ENCODE measurements at regions of chr17 and their contacts with region 1.

Region 1: DNA sequence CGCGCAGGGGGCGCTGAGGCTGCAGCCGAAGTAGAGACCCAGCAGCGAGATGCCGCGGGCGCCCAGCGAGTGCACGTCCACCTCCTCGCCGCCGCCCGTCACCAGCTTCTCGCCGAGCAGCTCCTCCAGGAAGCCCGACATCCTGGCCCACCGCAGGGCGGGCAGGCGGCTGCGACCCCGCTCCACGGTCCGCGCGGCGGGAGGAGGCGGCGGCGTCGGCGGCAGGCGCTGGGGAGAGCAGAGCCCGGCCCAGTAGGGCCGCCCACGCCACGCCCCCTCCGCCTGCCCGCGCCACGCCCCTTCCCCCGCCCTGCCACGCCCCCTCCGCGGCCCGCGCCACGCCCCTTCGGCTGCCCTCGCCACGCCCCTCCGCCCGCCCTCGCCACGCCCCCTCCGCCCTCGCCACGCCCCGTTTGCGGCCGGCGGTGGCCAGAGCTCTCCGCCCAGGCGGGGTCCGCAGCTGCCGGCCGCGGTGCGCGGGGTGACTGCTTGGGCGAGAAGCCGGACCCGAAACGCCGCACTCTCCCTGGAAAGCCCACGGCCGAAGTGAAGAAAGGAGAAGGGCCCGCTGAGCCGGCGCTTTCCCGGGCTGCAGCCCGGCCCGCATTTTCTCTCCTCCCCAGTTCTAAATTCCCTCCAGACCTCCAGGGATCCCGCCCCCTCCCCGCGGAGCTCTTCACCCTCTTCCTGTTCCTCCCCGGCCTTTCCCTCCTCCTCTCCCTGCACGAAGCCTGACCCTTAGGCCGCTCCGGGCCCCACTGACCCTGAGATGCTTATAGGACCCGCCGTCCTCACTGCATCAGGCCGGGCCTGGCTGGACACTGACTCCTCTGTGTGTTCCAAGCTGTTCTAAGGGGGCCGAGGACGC is at the start of gene NXN:
- DNase-seq: peak; percentile 81 to 96 (median 90)
- ATAC-seq: peak; percentile 86
- H3K4me3 ChIP-seq: peak within 1 kb of the TSS; percentile 53 to 58
- H3K4me3 Mint-ChIP-seq: peak within 1 kb of the TSS; percentile 78
- H3K27ac ChIP-seq: no peak within 1 kb of the TSS
- H3K27ac Mint-ChIP-seq: peak within 1 kb of the TSS; percentile 15
- H3K4me1 ChIP-seq: peaks cover 18% of the 10 kb centered on the region
- H3K4me1 Mint-ChIP-seq: peaks cover 19% of the 10 kb centered on the region
- H3K27me3 ChIP-seq: peaks cover 16 to 17% of the 10 kb centered on the region in 2 experiments
- H3K27me3 Mint-ChIP-seq: peaks cover 32% of the 10 kb centered on the region
- CTCF ChIP-seq: no peak
- total RNA-seq, gene NXN: 0.17 to 0.95 TPM

Region 2: GRCh38 chr17:143782-144281 is 835.9 kb before region 1 on chr17:
- CTCF ChIA-PET with region 1: no interaction called
- POLR2A ChIA-PET with region 1: no interaction called
- intact Hi-C with region 1: loop called in 1 of 2 experiments (anchors 2 kb)
- DNase-seq: peak; percentile 69 to 92 (median 83)
- ATAC-seq: peak; percentile 99
- H3K4me3 ChIP-seq: no peak overlapping the region
- H3K4me3 Mint-ChIP-seq: no peak overlapping the region
- H3K27ac ChIP-seq: no peak overlapping the region
- H3K27ac Mint-ChIP-seq: no peak overlapping the region
- H3K4me1 ChIP-seq: peaks cover 3% of the 10 kb centered on the region
- H3K4me1 Mint-ChIP-seq: peaks cover 2% of the 10 kb centered on the region
- H3K27me3 ChIP-seq: no peaks in the 10 kb centered on the region
- H3K27me3 Mint-ChIP-seq: peaks cover 6% of the 10 kb centered on the region
- CTCF ChIP-seq: peak; percentile 94

Region 3: GRCh38 chr17:404703-405102 is 575.1 kb before region 1 on chr17:
- CTCF ChIA-PET with region 1: no interaction called
- POLR2A ChIA-PET with region 1: no interaction called
- intact Hi-C with region 1: no loop called
- DNase-seq: no peak
- ATAC-seq: no peak
- H3K4me3 ChIP-seq: no peak overlapping the region
- H3K4me3 Mint-ChIP-seq: no peak overlapping the region
- H3K27ac ChIP-seq: no peak overlapping the region
- H3K27ac Mint-ChIP-seq: no peak overlapping the region
- H3K4me1 ChIP-seq: peaks cover 8% of the 10 kb centered on the region
- H3K4me1 Mint-ChIP-seq: peaks cover 9% of the 10 kb centered on the region
- H3K27me3 ChIP-seq: no peaks in the 10 kb centered on the region
- H3K27me3 Mint-ChIP-seq: no peaks in the 10 kb centered on the region
- CTCF ChIP-seq: no peak

Region 4: GRCh38 chr17:716238-716637 is 263.5 kb before region 1 on chr17:
- CTCF ChIA-PET with region 1: interaction called, 4 read pairs
- POLR2A ChIA-PET with region 1: interaction called, 5 read pairs
- intact Hi-C with region 1: loop called (anchors 1 to 5 kb)
- DNase-seq: no peak
- ATAC-seq: no peak
- H3K4me3 ChIP-seq: no peak overlapping the region
- H3K4me3 Mint-ChIP-seq: no peak overlapping the region
- H3K27ac ChIP-seq: no peak overlapping the region
- H3K27ac Mint-ChIP-seq: no peak overlapping the region
- H3K4me1 ChIP-seq: peaks cover 18% of the 10 kb centered on the region
- H3K4me1 Mint-ChIP-seq: peaks cover 31% of the 10 kb centered on the region
- H3K27me3 ChIP-seq: no peaks in the 10 kb centered on the region
- H3K27me3 Mint-ChIP-seq: no peaks in the 10 kb centered on the region
- CTCF ChIP-seq: no peak

Region 5: DNA sequence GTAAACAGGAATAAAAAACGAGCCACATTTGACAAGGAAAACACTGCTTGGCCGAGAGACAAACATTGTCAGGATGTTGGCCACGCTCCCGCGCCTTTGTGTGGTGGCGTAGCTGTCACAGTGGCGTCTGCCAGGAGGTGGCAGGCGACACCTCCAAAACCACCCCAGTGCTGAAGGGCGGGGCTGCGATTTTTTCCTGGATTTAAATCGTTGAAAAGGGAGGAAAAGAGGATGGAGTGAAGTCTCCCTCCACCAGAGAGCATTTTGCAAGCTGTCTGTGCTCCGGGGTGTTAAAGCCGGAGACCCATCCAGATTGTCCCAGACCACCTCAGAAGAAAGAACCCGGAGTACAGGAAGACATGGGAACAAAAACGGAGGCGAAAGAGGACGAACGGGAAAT is 184.9 kb before region 1 on chr17:
- CTCF ChIA-PET with region 1: interaction called, 40 read pairs
- POLR2A ChIA-PET with region 1: interaction called, 3 read pairs
- intact Hi-C with region 1: loop called in 1 of 2 experiments (anchors 1 kb)
- DNase-seq: peak in 8 of 9 experiments; percentile 6 to 65 (median 42)
- ATAC-seq: peak; percentile 76
- H3K4me3 ChIP-seq: no peak overlapping the region
- H3K4me3 Mint-ChIP-seq: no peak overlapping the region
- H3K27ac ChIP-seq: no peak overlapping the region
- H3K27ac Mint-ChIP-seq: no peak overlapping the region
- H3K4me1 ChIP-seq: no peaks in the 10 kb centered on the region
- H3K4me1 Mint-ChIP-seq: peaks cover 5% of the 10 kb centered on the region
- H3K27me3 ChIP-seq: no peaks in the 10 kb centered on the region
- H3K27me3 Mint-ChIP-seq: no peaks in the 10 kb centered on the region
- CTCF ChIP-seq: peak; percentile 64

Region 6: GRCh38 chr17:1203111-1203966 is 223.6 kb after region 1 on chr17:
- CTCF ChIA-PET with region 1: no interaction called
- POLR2A ChIA-PET with region 1: no interaction called
- intact Hi-C with region 1: loop called in 1 of 2 experiments (anchors 10 kb)
- DNase-seq: peak; percentile 30 to 78 (median 52)
- ATAC-seq: peak; percentile 66
- H3K4me3 ChIP-seq: peak overlapping the region in 1 of 2 experiments; percentile 35
- H3K4me3 Mint-ChIP-seq: peak overlapping the region; percentile 5
- H3K27ac ChIP-seq: no peak overlapping the region
- H3K27ac Mint-ChIP-seq: no peak overlapping the region
- H3K4me1 ChIP-seq: peaks cover 48% of the 10 kb centered on the region
- H3K4me1 Mint-ChIP-seq: peaks cover 34% of the 10 kb centered on the region
- H3K27me3 ChIP-seq: no peaks in the 10 kb centered on the region
- H3K27me3 Mint-ChIP-seq: no peaks in the 10 kb centered on the region
- CTCF ChIP-seq: no peak

Region 7: GRCh38 chr17:1839516-1839915 is 859.7 kb after region 1 on chr17:
- CTCF ChIA-PET with region 1: no interaction called
- POLR2A ChIA-PET with region 1: no interaction called
- intact Hi-C with region 1: no loop called
- DNase-seq: no peak
- ATAC-seq: no peak
- H3K4me3 ChIP-seq: no peak overlapping the region
- H3K4me3 Mint-ChIP-seq: no peak overlapping the region
- H3K27ac ChIP-seq: no peak overlapping the region
- H3K27ac Mint-ChIP-seq: no peak overlapping the region
- H3K4me1 ChIP-seq: peaks cover 8% of the 10 kb centered on the region
- H3K4me1 Mint-ChIP-seq: peaks cover 24% of the 10 kb centered on the region
- H3K27me3 ChIP-seq: no peaks in the 10 kb centered on the region
- H3K27me3 Mint-ChIP-seq: no peaks in the 10 kb centered on the region
- CTCF ChIP-seq: no peak

Measured in CD8-positive, alpha-beta T cell (primary cell).